Endothelial cell of umbilical vein (primary cell): ENCODE measurements at regions of chr11 and their contacts with region 1.

Region 1: DNA sequence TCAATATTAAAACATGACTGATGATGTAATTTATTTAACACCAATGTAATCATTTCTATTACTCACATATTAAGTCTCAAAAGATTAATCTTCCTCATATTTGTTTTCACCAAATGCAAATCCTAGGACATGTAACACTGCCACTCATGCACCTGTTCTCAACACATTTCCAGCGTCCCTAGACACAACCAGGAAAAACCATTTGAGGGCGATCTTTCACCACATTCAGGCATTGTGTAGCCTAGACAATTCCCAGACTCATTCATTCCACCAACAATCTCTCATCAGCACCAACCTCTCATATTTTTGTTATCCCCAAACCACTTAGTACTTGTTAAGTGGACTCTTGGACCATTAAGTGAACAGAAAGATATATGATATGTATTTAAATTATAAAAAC is 66.1 kb downstream of the SLC36A4 start:
- DNase-seq: peak; percentile 44
- H3K4me3 ChIP-seq: no peak overlapping the region
- H3K27ac ChIP-seq: no peak overlapping the region
- H3K4me1 ChIP-seq: no peaks in the 10 kb centered on the region
- H3K27me3 ChIP-seq: no peaks in the 10 kb centered on the region
- CTCF ChIP-seq: no peak
- POLR2A ChIP-seq: no peak

Region 2: DNA sequence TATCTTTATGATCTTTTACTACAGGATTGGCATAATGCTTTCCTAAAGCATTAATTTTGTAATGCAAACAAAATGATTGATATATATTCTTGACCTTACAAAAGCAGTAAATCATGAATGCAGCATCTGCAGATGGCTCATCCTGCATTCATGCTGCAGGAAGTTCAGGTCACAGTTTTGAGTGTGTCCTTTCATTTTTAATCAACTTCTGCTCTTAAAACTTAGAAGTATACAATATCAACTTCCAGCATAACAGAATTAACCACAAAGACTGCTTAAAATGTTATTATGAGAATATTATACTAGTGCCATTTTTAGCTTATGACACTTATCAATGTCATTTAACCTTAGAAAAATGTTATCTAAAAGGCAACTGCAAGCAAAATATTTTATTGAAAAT is 12.1 kb after region 1 on chr11:
- CTCF ChIA-PET with region 1: interaction called, 23 read pairs
- POLR2A ChIA-PET with region 1: no interaction called
- dilution Hi-C with region 1: no loop called
- intact Hi-C with region 1: no loop called
- DNase-seq: no peak
- H3K4me3 ChIP-seq: no peak overlapping the region
- H3K27ac ChIP-seq: no peak overlapping the region
- H3K4me1 ChIP-seq: no peaks in the 10 kb centered on the region
- H3K27me3 ChIP-seq: no peaks in the 10 kb centered on the region
- CTCF ChIP-seq: no peak
- POLR2A ChIP-seq: no peak

Region 3: GRCh38 chr11:93225662-93226061 is 94.0 kb after region 1 on chr11:
- CTCF ChIA-PET with region 1: interaction called, 5 read pairs
- POLR2A ChIA-PET with region 1: no interaction called
- dilution Hi-C with region 1: no loop called
- intact Hi-C with region 1: loop called (anchors 1 kb)
- DNase-seq: peak; percentile 41
- H3K4me3 ChIP-seq: no peak overlapping the region
- H3K27ac ChIP-seq: no peak overlapping the region
- H3K4me1 ChIP-seq: no peaks in the 10 kb centered on the region
- H3K27me3 ChIP-seq: no peaks in the 10 kb centered on the region
- CTCF ChIP-seq: no peak
- POLR2A ChIP-seq: no peak

Region 4: GRCh38 chr11:93652161-93652597 is 520.5 kb after region 1 on chr11:
- CTCF ChIA-PET with region 1: no interaction called
- POLR2A ChIA-PET with region 1: no interaction called
- dilution Hi-C with region 1: no loop called
- intact Hi-C with region 1: loop called (anchors 5 kb)
- DNase-seq: peak; percentile 56
- H3K4me3 ChIP-seq: no peak overlapping the region
- H3K27ac ChIP-seq: no peak overlapping the region
- H3K4me1 ChIP-seq: no peaks in the 10 kb centered on the region
- H3K27me3 ChIP-seq: peaks cover 22 to 24% of the 10 kb centered on the region in 2 experiments
- CTCF ChIP-seq: peak; percentile 51 to 52
- POLR2A ChIP-seq: no peak